GM10248 (cell line): ENCODE measurements at regions of chr11 and their contacts with region 1.

Region 1: DNA sequence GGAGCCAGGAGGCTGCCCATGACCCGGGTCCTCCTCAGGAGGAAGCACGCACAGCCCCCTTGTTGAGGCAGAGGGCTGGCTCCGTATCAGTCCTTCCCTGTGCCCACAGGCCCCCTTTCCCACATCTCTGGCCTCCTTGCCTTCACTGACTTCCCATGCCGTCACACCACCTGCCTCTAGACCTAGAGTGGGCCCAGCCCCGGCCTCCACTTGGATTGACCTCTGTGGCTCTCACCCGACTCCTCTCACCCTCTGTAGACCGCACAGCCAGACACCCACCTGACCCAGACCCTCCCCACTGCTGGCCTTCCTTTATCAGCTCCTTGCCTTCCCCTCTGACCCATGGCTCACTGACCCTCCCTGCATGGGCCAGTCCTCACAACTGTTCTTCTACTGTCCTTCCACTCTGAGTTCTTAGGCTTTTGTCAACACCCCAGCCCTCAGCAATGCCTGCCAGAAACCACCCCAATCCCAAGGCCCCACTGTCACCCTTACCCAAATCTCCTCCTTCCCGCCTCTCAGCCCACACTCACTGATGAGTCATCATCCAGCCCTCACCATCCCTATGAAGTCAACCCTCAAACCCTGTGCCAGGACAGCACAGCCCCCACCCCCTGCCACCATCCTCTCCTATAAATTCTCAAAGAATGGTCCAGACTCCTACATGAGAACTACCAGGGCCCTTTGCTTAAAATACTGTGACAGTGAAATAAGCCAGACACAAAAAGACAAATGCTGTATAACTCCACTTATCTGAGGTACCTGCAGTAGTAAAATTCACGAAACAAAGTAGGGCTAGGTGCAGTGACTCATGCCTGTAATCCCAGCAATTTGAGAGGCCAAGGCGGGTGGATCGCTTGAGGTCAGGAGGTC is 53.4 kb downstream of the SCGB1A1 start:
- DNase-seq: no peak
- CTCF ChIP-seq: no peak

Region 2: GRCh38 chr11:62054484-62055121 is 417.6 kb before region 1 on chr11:
- CTCF ChIA-PET with region 1: no interaction called
- POLR2A ChIA-PET with region 1: interaction called, 10 read pairs
- DNase-seq: no peak
- CTCF ChIP-seq: peak; percentile 17

Region 3: DNA sequence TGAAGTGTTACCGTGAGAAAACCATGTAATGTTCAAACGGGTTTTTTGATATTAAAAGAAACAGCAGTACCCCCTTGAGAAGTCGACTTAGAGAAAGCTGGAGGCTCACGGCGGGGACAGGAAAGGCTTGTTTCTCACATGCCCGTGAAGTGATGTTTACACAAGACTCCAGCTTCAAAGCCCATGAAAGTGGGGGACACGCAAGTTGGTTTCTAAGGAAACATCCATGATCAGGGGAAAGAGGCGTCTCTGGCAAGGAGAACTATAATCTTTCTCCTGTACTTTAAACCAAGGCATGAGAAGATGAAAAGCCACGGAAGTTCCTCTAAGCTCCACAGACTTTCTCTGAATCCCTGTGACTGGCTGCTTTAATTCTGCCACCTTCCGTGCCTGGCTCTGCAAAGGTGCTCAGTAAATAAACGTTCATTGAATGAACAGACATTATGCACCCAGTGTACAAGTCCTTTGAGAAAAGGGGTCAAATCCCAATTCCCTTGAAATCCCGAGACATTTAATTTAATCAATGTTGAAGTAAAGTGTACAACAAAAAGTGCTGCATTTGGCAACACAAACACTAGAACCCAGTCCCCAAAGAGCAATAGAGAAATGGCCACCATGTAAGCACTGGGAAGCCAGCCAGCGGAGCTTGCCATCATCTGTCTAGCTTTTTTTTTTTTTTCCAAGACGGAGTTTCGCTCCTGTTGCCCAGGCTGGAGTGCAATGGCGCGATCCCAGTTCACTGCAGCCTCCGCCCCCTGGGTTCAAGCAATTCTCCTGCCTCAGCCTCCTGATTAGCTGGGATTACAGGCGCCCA is 15.7 kb after region 1 on chr11:
- CTCF ChIA-PET with region 1: interaction called, 4 read pairs
- POLR2A ChIA-PET with region 1: interaction called, 13 read pairs
- DNase-seq: no peak
- CTCF ChIP-seq: no peak